ENCODE measurements at regions of chr20 and their contacts with region 1.

Region 1: GRCh38 chr20:50844430-50845100 is 49.7 kb downstream of the BCAS4 start:
- DNase-seq: no peak
- ATAC-seq: peak; percentile 82
- H3K4me3 ChIP-seq: no peak overlapping the region
- H3K4me3 Mint-ChIP-seq: peak overlapping the region; percentile 23
- H3K27ac ChIP-seq: no peak overlapping the region
- H3K27ac Mint-ChIP-seq: peak overlapping the region; percentile 80
- H3K4me1 ChIP-seq: peaks cover 14 to 45% of the 10 kb centered on the region in 2 donors
- H3K4me1 Mint-ChIP-seq: peaks cover 44% of the 10 kb centered on the region
- H3K27me3 ChIP-seq: no peaks in the 10 kb centered on the region
- H3K27me3 Mint-ChIP-seq: no peaks in the 10 kb centered on the region
- CTCF ChIP-seq: no peak

Region 2: DNA sequence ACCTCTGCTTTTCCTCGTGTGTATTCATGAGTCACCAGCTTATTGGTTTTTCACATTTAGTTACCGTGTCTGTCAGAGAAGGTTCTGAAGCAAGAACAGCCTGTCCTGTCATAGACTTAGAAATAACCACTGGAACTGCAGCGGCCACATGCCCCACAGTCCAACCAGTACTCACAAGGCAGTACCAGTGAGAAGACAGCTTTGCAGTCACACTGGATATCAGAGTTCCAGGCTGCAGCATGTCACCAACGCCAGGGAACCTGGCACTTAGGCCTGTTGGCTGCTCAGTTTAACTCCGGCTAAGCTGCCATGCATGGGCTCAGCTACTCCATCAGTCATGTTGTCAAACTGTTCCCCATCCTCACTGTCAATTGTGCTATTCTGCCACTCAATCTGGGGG is 46.6 kb after region 1 on chr20:
- CTCF ChIA-PET with region 1: no interaction called
- POLR2A ChIA-PET with region 1: no interaction called
- intact Hi-C with region 1: loop called (anchors 5 kb)
- DNase-seq: no peak
- ATAC-seq: no peak
- H3K4me3 ChIP-seq: no peak overlapping the region
- H3K4me3 Mint-ChIP-seq: no peak overlapping the region
- H3K27ac ChIP-seq: no peak overlapping the region
- H3K27ac Mint-ChIP-seq: peak overlapping the region; percentile 51
- H3K4me1 ChIP-seq: no peaks in the 10 kb centered on the region
- H3K4me1 Mint-ChIP-seq: peaks cover 5% of the 10 kb centered on the region
- H3K27me3 ChIP-seq: no peaks in the 10 kb centered on the region
- H3K27me3 Mint-ChIP-seq: no peaks in the 10 kb centered on the region
- CTCF ChIP-seq: no peak

Measured in B cell (primary cell).